Activated CD8-positive, alpha-beta T cell treated with anti-CD3 and anti-CD28 coated beads for 36 hours (primary cell): ENCODE measurements at regions of chr17 and their contacts with region 1.

Region 1: DNA sequence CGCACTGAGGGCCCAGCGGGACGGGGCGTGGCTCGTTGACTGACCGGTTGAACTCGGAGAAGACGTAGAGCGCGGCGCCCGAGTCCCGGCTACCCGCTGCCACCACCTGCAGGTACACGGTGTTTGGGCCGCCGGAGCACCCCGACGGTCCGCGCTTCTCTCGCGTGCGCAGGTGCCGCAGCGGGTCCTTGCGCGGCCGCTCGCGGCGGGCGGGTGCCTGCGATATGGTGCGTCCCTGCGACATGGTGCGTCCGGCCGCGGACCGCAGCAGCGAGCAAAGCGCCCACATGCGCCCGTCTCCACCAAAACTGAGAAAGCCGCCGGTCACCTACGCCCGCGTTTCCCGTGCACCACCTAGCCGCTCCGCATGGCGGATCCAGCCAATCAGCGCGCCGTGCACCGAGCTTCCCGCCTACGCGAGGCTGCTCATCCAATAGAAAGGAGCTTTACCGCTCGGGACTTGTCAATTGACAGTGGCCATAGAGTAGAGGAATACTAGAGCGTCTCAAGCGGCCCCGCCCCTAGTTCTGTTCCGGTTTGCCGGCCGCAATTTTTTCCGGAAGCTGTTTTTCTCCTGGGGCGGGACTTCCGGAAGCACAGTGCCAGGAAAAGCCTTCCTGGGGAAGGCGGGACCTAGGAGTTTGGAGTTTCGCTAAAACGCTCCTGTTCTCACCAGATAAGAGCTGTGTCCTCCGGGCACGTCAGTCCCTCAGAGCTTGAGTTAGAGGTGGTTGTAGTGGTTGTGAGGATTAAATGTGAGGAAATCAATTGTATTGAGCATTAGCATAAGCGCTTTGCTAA is at the start of gene ELAC2:
- DNase-seq: peak; percentile 99
- ATAC-seq: peak; percentile 98
- H3K4me3 Mint-ChIP-seq: peak within 1 kb of the TSS; percentile 90
- H3K27ac Mint-ChIP-seq: peak within 1 kb of the TSS; percentile 96
- H3K4me1 Mint-ChIP-seq: peaks cover 32% of the 10 kb centered on the region
- H3K27me3 Mint-ChIP-seq: no peaks in the 10 kb centered on the region
- CTCF ChIP-seq: no peak
- total RNA-seq, gene ELAC2: 60.1 to 67.6 TPM

Region 2: DNA sequence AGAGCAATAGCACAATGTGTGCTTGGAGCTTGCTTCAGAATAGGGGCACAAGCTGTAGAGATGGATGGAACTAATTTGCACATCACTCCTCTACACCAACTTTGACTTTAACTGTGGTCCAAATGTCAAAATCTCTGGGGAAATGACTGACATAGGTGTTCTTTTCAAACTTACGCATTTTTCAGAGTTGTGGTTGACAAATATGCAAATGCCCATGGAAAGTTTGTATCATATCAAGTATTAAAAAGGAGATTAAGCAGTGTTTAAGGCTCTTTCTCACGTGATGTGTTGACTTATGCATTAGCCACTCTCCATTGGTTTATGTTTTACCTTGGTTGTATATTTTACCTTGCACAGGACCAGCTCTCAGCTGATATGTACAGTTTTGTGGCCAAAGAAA is 77.2 kb before region 1 on chr17:
- CTCF ChIA-PET with region 1: no interaction called
- POLR2A ChIA-PET with region 1: no interaction called
- intact Hi-C with region 1: no loop called
- DNase-seq: no peak
- ATAC-seq: no peak
- H3K4me3 Mint-ChIP-seq: no peak overlapping the region
- H3K27ac Mint-ChIP-seq: no peak overlapping the region
- H3K4me1 Mint-ChIP-seq: no peaks in the 10 kb centered on the region
- H3K27me3 Mint-ChIP-seq: peaks cover 1% of the 10 kb centered on the region
- CTCF ChIP-seq: no peak

Region 3: GRCh38 chr17:13002766-13003451 is 14.9 kb before region 1 on chr17:
- CTCF ChIA-PET with region 1: interaction called, 11 read pairs
- POLR2A ChIA-PET with region 1: interaction called, 11 read pairs
- intact Hi-C with region 1: no loop called
- DNase-seq: peak; percentile 72
- ATAC-seq: no peak
- H3K4me3 Mint-ChIP-seq: no peak overlapping the region
- H3K27ac Mint-ChIP-seq: no peak overlapping the region
- H3K4me1 Mint-ChIP-seq: peaks cover 3% of the 10 kb centered on the region
- H3K27me3 Mint-ChIP-seq: no peaks in the 10 kb centered on the region
- CTCF ChIP-seq: peak; percentile 88

Region 4: DNA sequence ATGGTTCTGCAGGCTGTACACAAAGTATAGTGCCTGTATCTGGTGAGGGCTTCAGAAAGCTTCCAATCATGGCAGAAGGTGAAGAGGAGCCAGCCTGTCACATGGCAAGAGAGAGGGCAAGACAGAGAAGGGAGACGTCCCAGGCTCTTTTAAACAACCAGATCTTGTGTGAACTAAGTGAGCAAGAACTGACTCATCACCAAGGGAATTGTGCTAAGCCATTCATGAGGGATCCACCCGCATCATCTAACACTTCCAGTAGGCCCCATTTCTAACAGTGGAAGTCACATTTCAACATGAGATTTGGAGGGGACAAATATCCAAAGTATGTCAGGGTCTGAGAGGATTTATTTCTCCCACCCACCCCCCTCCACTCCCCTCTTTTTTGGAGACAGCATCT is 56.2 kb after region 1 on chr17:
- CTCF ChIA-PET with region 1: no interaction called
- POLR2A ChIA-PET with region 1: no interaction called
- intact Hi-C with region 1: no loop called
- DNase-seq: no peak
- ATAC-seq: no peak
- H3K4me3 Mint-ChIP-seq: no peak overlapping the region
- H3K27ac Mint-ChIP-seq: no peak overlapping the region
- H3K4me1 Mint-ChIP-seq: no peaks in the 10 kb centered on the region
- H3K27me3 Mint-ChIP-seq: peaks cover 9% of the 10 kb centered on the region
- CTCF ChIP-seq: no peak